ENCODE measurements at regions of chr2 and their contacts with region 1.

Region 1: GRCh38 chr2:154507186-154507585 is 191.3 kb upstream of the KCNJ3 start:
- DNase-seq: no peak
- ATAC-seq: no peak
- H3K4me3 ChIP-seq: no peak overlapping the region
- H3K4me3 Mint-ChIP-seq: no peak overlapping the region
- H3K27ac ChIP-seq: no peak overlapping the region
- H3K27ac Mint-ChIP-seq: no peak overlapping the region
- H3K4me1 ChIP-seq: no peaks in the 10 kb centered on the region
- H3K4me1 Mint-ChIP-seq: no peaks in the 10 kb centered on the region
- H3K27me3 ChIP-seq: no peaks in the 10 kb centered on the region
- H3K27me3 Mint-ChIP-seq: no peaks in the 10 kb centered on the region
- CTCF ChIP-seq: no peak

Region 2: GRCh38 chr2:154439156-154439555 is 68.0 kb before region 1 on chr2:
- CTCF ChIA-PET with region 1: no interaction called
- POLR2A ChIA-PET with region 1: no interaction called
- intact Hi-C with region 1: no loop called
- DNase-seq: no peak
- ATAC-seq: no peak
- H3K4me3 ChIP-seq: no peak overlapping the region
- H3K4me3 Mint-ChIP-seq: no peak overlapping the region
- H3K27ac ChIP-seq: no peak overlapping the region
- H3K27ac Mint-ChIP-seq: no peak overlapping the region
- H3K4me1 ChIP-seq: no peaks in the 10 kb centered on the region
- H3K4me1 Mint-ChIP-seq: no peaks in the 10 kb centered on the region
- H3K27me3 ChIP-seq: no peaks in the 10 kb centered on the region
- H3K27me3 Mint-ChIP-seq: no peaks in the 10 kb centered on the region
- CTCF ChIP-seq: no peak

Region 3: GRCh38 chr2:154470376-154470775 is 36.8 kb before region 1 on chr2:
- CTCF ChIA-PET with region 1: no interaction called
- POLR2A ChIA-PET with region 1: no interaction called
- intact Hi-C with region 1: loop called (anchors 1 kb)
- DNase-seq: no peak
- ATAC-seq: no peak
- H3K4me3 ChIP-seq: no peak overlapping the region
- H3K4me3 Mint-ChIP-seq: no peak overlapping the region
- H3K27ac ChIP-seq: no peak overlapping the region
- H3K27ac Mint-ChIP-seq: no peak overlapping the region
- H3K4me1 ChIP-seq: no peaks in the 10 kb centered on the region
- H3K4me1 Mint-ChIP-seq: no peaks in the 10 kb centered on the region
- H3K27me3 ChIP-seq: no peaks in the 10 kb centered on the region
- H3K27me3 Mint-ChIP-seq: no peaks in the 10 kb centered on the region
- CTCF ChIP-seq: no peak

Region 4: DNA sequence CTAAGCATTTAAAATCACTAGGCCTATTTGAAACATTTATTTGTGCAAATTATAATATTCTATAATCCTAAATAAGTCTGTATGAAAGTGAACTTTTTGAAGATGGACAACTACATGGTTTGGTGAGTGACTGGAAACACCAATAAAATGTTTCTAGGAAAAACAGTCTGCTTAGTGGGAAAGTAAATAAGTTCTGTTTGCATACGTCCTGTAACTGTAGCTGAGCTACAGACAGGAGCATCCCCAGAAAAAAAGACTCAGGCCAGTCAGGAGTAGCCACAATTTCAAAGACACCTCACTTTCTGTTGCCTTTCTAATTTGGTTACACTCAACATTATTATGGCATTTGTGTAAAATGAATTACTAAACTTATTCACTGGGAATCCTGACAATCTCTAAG is 162.9 kb after region 1 on chr2:
- CTCF ChIA-PET with region 1: no interaction called
- POLR2A ChIA-PET with region 1: no interaction called
- intact Hi-C with region 1: no loop called
- DNase-seq: no peak
- ATAC-seq: no peak
- H3K4me3 ChIP-seq: no peak overlapping the region
- H3K4me3 Mint-ChIP-seq: no peak overlapping the region
- H3K27ac ChIP-seq: no peak overlapping the region
- H3K27ac Mint-ChIP-seq: no peak overlapping the region
- H3K4me1 ChIP-seq: no peaks in the 10 kb centered on the region
- H3K4me1 Mint-ChIP-seq: no peaks in the 10 kb centered on the region
- H3K27me3 ChIP-seq: no peaks in the 10 kb centered on the region
- H3K27me3 Mint-ChIP-seq: no peaks in the 10 kb centered on the region
- CTCF ChIP-seq: no peak

Measured in B cell (primary cell).